ENCODE measurements at regions of chr6 and their contacts with region 1.

Region 1: GRCh38 chr6:75526502-75527127 is 33.0 kb upstream of the FILIP1 start:
- DNase-seq: peak; percentile 49 to 69
- H3K4me3 ChIP-seq: no peak overlapping the region
- H3K4me3 Mint-ChIP-seq: no peak overlapping the region
- H3K27ac Mint-ChIP-seq: no peak overlapping the region
- H3K4me1 ChIP-seq: peaks cover 10% of the 10 kb centered on the region
- H3K4me1 Mint-ChIP-seq: peaks cover 12% of the 10 kb centered on the region
- H3K27me3 ChIP-seq: no peaks in the 10 kb centered on the region
- H3K27me3 Mint-ChIP-seq: no peaks in the 10 kb centered on the region
- CTCF ChIP-seq: peak; percentile 60 to 73

Region 2: DNA sequence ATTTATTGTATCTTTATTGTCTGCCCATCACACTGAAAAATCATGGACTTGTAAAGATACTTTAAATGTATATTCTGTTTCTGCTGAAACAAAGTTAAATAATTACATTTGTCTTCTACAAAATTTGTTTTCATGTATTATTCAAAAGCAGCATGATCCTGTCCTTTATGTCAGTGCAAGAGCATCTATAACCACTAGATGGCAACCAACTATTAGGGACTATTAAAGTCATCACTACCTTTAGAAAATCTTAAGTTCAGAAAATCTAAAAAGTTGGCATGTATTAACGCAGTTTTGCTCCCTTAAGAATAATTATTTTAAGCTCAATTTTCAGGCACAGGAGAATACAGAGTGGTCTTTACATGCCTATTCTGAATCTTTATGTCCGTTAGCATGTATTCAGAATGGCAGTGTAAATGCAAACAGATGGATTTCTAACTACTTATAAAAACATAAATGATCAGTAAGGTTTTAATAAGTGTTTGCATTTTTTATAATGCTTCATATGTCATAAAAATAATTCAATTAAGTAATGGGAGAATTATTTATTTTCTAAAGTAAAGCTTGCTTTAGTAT is 259.8 kb before region 1 on chr6:
- CTCF ChIA-PET with region 1: no interaction called
- POLR2A ChIA-PET with region 1: no interaction called
- intact Hi-C with region 1: loop called (anchors 1 kb)
- DNase-seq: peak in 1 of 2 experiments; percentile 26
- H3K4me3 ChIP-seq: no peak overlapping the region
- H3K4me3 Mint-ChIP-seq: no peak overlapping the region
- H3K27ac Mint-ChIP-seq: no peak overlapping the region
- H3K4me1 ChIP-seq: no peaks in the 10 kb centered on the region
- H3K4me1 Mint-ChIP-seq: no peaks in the 10 kb centered on the region
- H3K27me3 ChIP-seq: no peaks in the 10 kb centered on the region
- H3K27me3 Mint-ChIP-seq: no peaks in the 10 kb centered on the region
- CTCF ChIP-seq: peak; percentile 68 to 74

Region 3: DNA sequence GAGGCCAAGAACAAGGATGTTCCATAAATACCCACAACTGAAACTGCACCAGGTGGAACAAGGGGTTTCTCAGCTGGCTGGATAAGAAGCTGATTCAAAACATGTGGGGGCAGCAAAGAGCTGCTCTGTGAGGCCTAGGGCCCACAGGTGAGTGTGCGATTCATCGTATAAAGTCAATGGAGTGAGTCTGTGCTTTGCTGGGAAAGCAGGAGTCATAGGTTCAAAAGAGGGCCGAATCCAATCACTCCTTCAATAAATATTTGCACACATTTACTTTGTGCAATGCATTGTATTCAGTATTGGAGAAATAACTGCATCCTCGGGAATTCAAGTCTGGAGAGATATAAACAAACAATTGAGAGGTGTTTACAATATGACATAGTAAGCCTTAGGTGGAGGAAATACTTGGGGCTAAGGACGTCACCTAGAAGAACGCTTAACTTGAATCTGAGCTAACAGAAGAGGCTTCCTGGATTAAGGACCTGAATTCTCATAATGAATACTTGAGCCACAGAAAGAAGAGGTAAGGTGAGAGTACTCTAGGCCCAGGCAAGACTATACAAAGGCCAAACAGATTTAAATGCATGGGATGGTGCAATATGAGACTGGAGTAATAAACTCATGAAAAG is 158.3 kb before region 1 on chr6:
- CTCF ChIA-PET with region 1: interaction called, 9 read pairs
- POLR2A ChIA-PET with region 1: no interaction called
- intact Hi-C with region 1: loop called (anchors 1 kb)
- DNase-seq: peak; percentile 50 to 65
- H3K4me3 ChIP-seq: no peak overlapping the region
- H3K4me3 Mint-ChIP-seq: no peak overlapping the region
- H3K27ac Mint-ChIP-seq: no peak overlapping the region
- H3K4me1 ChIP-seq: no peaks in the 10 kb centered on the region; the same call in 1 of the 2 replicates
- H3K4me1 Mint-ChIP-seq: no peaks in the 10 kb centered on the region
- H3K27me3 ChIP-seq: no peaks in the 10 kb centered on the region
- H3K27me3 Mint-ChIP-seq: peaks cover 3% of the 10 kb centered on the region
- CTCF ChIP-seq: peak; percentile 51 to 56

Region 4: DNA sequence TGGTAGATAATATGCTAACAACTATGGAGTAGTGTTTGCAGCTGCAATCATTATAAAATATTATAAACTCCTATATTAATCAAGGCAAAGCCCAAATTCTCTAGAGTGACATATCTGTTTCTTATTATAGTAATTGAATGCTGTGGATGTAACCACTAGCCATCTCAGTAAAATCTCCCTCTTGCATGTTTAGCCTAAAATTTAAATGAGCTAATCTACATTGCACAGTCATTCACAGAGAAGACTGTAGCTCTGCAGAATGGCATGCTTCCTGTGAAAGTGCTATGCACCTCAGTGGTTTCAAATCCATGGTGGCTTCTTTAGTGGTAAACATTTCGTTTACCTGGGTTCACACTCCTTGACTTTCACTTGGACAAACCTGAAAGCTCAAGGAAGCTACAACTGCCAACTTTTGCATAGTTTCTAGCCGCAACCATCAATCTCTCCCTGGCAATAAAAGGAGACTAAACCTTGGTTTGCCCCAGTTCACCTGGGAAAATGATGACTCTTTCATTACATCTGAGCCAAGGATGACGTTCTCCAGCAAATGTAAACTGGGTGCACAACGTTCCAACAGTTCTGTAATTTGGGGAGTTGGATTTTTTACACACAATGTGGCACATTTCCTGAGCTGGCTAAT is 80.3 kb before region 1 on chr6:
- CTCF ChIA-PET with region 1: no interaction called
- POLR2A ChIA-PET with region 1: no interaction called
- intact Hi-C with region 1: no loop called
- DNase-seq: no peak
- H3K4me3 ChIP-seq: no peak overlapping the region
- H3K4me3 Mint-ChIP-seq: no peak overlapping the region
- H3K27ac Mint-ChIP-seq: no peak overlapping the region
- H3K4me1 ChIP-seq: no peaks in the 10 kb centered on the region
- H3K4me1 Mint-ChIP-seq: no peaks in the 10 kb centered on the region
- H3K27me3 ChIP-seq: no peaks in the 10 kb centered on the region
- H3K27me3 Mint-ChIP-seq: peaks cover 3% of the 10 kb centered on the region
- CTCF ChIP-seq: no peak

Region 5: DNA sequence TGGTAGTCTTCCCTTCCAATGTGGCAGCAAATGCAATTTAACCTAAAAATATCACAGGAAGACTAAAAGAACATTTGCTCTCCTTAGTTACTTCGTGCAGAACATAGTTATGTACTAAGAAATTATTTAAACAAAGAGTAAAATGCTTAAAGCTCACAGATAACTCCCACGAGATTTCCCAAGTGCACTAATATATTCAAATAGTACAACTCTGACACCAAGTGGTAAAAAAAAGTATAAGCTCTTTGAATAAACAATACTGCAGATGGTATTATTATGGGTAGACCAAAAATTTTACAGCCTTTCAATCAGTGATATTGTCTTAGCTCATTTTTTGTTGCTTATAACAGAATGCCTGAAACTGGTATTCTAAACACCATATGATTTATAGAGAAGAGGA is 19.8 kb after region 1 on chr6:
- CTCF ChIA-PET with region 1: interaction called, 6 read pairs
- POLR2A ChIA-PET with region 1: no interaction called
- intact Hi-C with region 1: loop called (anchors 2 kb)
- DNase-seq: no peak
- H3K4me3 ChIP-seq: no peak overlapping the region
- H3K4me3 Mint-ChIP-seq: no peak overlapping the region
- H3K27ac Mint-ChIP-seq: no peak overlapping the region
- H3K4me1 ChIP-seq: no peaks in the 10 kb centered on the region
- H3K4me1 Mint-ChIP-seq: no peaks in the 10 kb centered on the region
- H3K27me3 ChIP-seq: no peaks in the 10 kb centered on the region
- H3K27me3 Mint-ChIP-seq: no peaks in the 10 kb centered on the region
- CTCF ChIP-seq: no peak

Measured in Caco-2 (cell line).